Left ventricle myocardium inferior (tissue), 1 donor: ENCODE measurements at regions of chr11 and their contacts with region 1.

Region 1: DNA sequence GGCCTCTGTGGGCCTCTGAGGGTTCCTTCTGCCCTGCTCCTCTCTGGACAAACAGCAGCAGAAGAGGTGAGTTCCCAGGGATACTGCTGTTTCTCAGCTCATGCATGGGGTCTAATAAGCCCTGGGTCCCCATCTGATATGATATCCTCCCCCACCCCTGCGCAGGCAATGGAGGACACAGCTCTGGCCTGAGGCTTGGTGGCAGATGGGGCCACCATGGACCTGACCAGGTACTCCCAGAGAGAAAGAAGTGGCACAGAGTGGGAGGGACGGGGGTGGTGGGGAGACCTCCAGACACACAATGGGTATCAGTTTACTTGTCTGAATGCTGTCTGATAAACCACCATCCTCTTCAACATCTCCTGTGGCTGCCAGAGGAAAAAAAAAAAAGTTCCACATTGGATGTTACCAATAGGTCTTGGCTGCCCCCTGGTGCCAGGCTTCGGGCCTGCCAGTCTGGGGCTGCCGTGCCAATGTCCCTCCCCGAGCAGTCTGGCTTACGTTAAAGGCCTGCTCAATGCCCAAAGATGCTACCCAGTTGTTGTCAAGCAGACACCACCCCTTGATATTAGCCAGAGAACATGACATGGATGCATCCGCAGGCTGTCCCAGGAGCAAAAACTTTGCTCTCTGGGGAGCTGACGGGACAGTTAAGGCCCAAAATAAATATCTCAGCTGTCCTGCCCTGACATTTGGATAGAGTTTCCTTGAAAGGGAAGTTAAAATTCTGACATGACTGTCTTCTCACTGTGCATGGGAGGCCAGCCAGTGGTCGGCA is 27.9 kb upstream of the ABCC8 start:
- DNase-seq: peak; percentile 77
- H3K4me3 ChIP-seq: no peak overlapping the region
- H3K27ac ChIP-seq: no peak overlapping the region
- H3K4me1 ChIP-seq: peaks cover 19% of the 10 kb centered on the region
- H3K27me3 ChIP-seq: peaks cover 17% of the 10 kb centered on the region
- CTCF ChIP-seq: peak; percentile 91

Region 2: GRCh38 chr11:17384002-17384511 is 120.5 kb before region 1 on chr11:
- intact Hi-C with region 1: loop called (anchors 5 kb)
- DNase-seq: peak; percentile 79
- H3K4me3 ChIP-seq: no peak overlapping the region
- H3K27ac ChIP-seq: no peak overlapping the region
- H3K4me1 ChIP-seq: peaks cover 49% of the 10 kb centered on the region
- H3K27me3 ChIP-seq: peaks cover 31% of the 10 kb centered on the region
- CTCF ChIP-seq: peak; percentile 93